Dendritic cell treated with granulocyte-macrophage colony-stimulating factor and Interleukin-4, amounts not matched to agents 40 ng/mL and 50 ng/mL, for 4 days (primary cell): ENCODE measurements at regions of chr13 and their contacts with region 1.

Region 1: DNA sequence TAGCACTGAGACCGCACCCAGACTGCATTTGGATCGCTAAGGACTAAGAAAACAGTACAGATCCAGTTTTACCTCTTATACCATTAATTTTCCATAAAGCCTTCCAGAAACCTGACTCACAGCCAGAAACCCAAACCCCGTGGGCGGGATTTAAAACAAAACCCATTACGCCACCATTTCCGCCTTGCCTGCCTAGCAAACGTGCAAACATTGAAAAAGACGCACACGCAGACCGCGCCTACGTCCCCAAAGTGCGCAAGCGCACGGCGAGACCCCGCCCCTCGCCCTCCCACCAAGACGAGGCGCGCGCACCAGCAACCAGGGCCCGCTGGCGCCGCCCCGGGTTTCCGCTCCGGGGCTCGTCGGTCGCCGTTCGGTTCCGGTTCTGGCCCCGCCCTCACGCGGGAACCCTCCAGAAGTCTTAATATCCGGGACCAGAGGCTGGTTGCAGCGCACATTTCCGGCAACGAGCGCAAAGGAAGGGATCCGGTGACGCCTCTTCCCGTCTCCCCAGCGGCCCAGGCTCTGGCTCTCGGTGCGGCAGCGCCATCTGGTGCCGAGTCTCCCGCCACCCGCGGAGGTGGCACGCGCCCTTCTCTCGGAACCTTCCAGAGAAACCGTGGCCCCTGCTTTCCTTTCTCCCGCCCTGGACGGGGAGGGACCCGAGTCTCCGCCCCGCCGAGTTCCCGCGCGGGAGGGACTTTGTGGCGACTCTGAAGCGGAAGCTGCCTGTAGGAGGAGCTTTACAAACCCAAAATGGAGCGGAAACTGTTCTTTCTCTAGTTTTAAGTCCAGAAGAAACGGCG is 256.9 kb upstream of the STARD13 start:
- H3K4me3 Mint-ChIP-seq: peak overlapping the region; percentile 85
- H3K27ac Mint-ChIP-seq: peak overlapping the region; percentile 99
- H3K4me1 Mint-ChIP-seq: peaks cover 34% of the 10 kb centered on the region
- H3K27me3 Mint-ChIP-seq: no peaks in the 10 kb centered on the region

Region 2: GRCh38 chr13:32538621-32539246 is 1003.8 kb before region 1 on chr13 and contains the start of gene N4BP2L2:
- intact Hi-C with region 1: loop called (anchors 5 kb)
- H3K4me3 Mint-ChIP-seq: peak within 1 kb of the TSS; percentile 94
- H3K27ac Mint-ChIP-seq: peak within 1 kb of the TSS; percentile 98
- H3K4me1 Mint-ChIP-seq: peaks cover 40% of the 10 kb centered on the region
- H3K27me3 Mint-ChIP-seq: no peaks in the 10 kb centered on the region

Region 3: DNA sequence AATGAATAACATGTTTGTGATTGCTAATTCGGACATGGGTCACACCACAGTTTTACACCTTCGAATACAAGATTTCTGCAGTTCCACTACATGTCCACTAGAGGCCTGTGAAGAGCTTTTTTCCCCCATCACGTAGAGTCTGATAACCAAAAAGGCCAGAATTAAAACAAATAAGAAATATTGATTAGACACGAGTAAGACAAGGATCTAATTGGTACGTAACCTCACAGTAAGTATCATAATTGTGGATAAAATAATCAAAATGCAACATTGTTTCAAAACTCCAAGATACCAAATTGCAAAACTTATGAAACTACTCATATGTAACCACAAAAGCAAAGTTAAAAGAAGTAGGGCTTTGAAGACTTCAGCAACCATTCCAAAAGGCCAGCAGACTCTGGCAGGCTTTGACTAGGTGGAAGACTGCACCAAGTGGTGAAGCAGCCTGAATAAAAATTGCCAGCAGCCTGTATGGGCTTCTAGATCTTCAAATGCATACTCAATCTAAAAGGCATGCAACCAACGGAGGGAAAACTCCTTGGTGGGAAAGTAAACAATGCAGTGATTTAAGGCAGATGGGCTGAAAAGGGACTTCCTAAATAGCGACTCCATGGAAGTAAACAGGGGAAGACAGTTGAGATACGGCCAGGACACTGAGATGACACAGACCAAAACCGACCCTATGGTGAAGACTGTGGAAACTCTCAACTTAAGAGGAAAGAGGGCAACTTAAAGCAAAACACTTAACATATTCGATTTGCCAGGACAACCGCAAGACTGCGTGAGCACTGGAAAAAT is 313.6 kb before region 1 on chr13:
- intact Hi-C with region 1: loop called (anchors 1 kb)
- H3K4me3 Mint-ChIP-seq: no peak overlapping the region
- H3K27ac Mint-ChIP-seq: no peak overlapping the region
- H3K4me1 Mint-ChIP-seq: peaks cover 13% of the 10 kb centered on the region
- H3K27me3 Mint-ChIP-seq: no peaks in the 10 kb centered on the region

Region 4: GRCh38 chr13:33487575-33488243 is 54.8 kb before region 1 on chr13:
- intact Hi-C with region 1: loop called (anchors 5 kb)
- H3K4me3 Mint-ChIP-seq: no peak overlapping the region
- H3K27ac Mint-ChIP-seq: no peak overlapping the region
- H3K4me1 Mint-ChIP-seq: peaks cover 9% of the 10 kb centered on the region
- H3K27me3 Mint-ChIP-seq: no peaks in the 10 kb centered on the region

Region 5: DNA sequence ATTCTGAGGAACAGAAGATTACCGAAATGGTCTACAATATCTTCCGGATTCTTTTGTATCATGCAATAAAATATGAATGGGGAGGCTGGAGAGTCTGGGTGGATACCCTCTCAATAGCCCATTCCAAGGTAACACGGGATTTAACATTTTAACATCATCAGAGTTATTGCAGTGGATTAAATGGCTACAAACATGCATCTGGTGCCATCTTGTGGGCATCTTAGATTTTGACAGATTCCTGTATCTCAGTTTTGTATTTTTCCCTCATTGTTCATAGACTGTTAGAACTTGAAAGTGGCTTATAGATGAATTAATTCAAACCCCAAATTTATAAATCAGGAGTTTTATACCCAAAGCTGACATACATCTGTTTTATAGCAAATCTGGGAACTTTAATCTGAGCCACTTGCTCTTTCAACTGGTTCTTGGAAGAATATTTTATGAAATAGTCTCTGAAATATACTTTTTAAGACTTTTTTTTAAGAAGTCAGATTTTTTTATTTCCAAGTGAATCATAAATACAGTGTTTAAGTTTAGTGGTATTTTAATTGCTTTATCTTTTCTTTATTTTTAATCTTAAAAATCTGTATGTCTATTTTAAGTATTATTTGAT is 1614.8 kb after region 1 on chr13:
- intact Hi-C with region 1: loop called (anchors 5 kb)
- H3K4me3 Mint-ChIP-seq: no peak overlapping the region
- H3K27ac Mint-ChIP-seq: no peak overlapping the region
- H3K4me1 Mint-ChIP-seq: peaks cover 11% of the 10 kb centered on the region
- H3K27me3 Mint-ChIP-seq: no peaks in the 10 kb centered on the region